Right cardiac atrium (tissue), 5 donors: ENCODE measurements at regions of chr1 and their contacts with region 1.

Region 1: DNA sequence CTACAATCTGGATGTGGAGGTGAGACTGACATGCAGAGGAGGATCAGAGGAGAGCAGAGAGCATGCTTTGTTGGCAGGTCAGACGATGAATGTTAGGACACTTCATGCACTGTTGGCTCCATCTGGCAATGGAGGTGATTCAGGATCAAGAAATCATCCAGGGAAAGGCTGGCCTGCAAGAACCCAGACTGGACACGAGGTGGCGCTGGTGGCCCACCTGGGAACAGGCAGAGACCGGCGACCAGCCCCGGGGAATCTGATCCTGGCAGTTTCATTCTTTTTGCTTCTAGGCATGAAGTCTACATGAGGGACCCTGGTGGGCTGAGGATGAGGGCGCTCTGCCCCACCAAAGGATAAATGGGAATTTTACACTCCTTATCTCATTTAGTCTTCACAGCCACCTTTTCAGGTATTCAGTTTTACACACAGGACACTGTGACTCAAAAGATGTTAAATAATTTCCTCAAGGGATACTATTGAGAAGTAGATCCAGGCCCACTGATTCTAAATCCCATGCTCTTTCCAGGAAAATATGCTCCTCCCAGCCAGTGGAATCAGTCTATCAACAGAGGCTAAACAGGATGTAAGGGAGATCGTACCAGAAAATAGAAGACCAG is 26.2 kb upstream of the SCMH1 start:
- DNase-seq: peak; percentile 76 to 88 (median 86)
- ATAC-seq: peak; percentile 81 to 86
- H3K4me3 ChIP-seq: no peak overlapping the region
- H3K27ac ChIP-seq: no peak overlapping the region
- H3K4me1 ChIP-seq: no peaks in the 10 kb centered on the region
- H3K27me3 ChIP-seq: no peaks in the 10 kb centered on the region

Region 2: DNA sequence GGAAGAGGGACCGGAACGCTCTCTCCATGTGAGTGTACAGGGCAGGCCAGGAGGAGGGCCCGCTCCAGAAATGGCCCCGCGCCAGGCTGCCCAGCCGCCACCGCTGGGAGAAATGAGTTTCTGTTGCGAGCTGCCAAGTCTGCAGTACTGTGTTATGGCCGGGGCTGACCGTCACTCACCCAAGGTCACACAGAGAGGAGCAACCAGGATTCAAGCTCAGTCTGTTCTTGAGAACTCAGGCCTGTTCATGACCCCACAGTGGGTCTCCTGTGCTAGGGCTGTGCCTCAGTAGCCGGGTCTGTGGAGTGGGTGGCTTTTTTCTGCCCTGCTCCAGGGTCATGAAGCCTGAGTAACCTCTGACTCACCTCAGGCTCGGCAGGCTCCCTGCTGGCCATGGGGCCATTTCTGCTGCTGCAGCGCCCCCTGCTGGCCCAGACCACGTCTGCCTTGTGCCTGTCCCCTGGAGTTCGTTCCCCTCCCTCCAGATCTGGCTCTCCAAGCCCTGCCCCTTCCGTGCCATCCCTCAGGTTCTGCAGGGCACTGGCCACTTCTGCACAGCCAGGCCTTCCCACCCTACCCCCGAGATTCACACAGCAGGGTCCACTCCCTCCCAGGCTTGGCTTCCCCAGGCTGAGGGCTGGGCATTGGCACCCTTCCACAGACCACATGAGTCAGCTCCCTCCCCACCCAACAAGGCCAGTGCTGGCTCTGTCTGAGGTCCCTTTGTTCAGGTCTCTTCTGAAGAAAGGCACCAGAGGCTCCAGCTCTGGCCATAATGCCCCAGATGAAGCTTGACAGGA is 164.4 kb after region 1 on chr1:
- intact Hi-C with region 1: loop called in 2 of 4 experiments (anchors 5 kb)
- DNase-seq: peak; percentile 90 to 95 (median 94)
- ATAC-seq: peak; percentile 88 to 92
- H3K4me3 ChIP-seq: no peak overlapping the region
- H3K27ac ChIP-seq: peak overlapping the region; percentile 47
- H3K4me1 ChIP-seq: peaks cover 16% of the 10 kb centered on the region
- H3K27me3 ChIP-seq: no peaks in the 10 kb centered on the region